Natural killer cell (primary cell): ENCODE measurements at regions of chr3 and their contacts with region 1.

Region 1: GRCh38 chr3:118884748-118885206 is 149.9 kb downstream of the IGSF11 start:
- DNase-seq: peak; percentile 65 to 83
- ATAC-seq: peak; percentile 80 to 95 (median 90)
- H3K4me3 ChIP-seq: no peak overlapping the region
- H3K4me3 Mint-ChIP-seq: no peak overlapping the region
- H3K27ac ChIP-seq: no peak overlapping the region
- H3K27ac Mint-ChIP-seq: no peak overlapping the region
- H3K4me1 ChIP-seq: no peaks in the 10 kb centered on the region
- H3K4me1 Mint-ChIP-seq: peaks cover 0 to 6% of the 10 kb centered on the region in 2 donors
- H3K27me3 ChIP-seq: no peaks in the 10 kb centered on the region
- H3K27me3 Mint-ChIP-seq: peaks cover 32 to 35% of the 10 kb centered on the region in 2 donors
- CTCF ChIP-seq: peak; percentile 87

Region 2: DNA sequence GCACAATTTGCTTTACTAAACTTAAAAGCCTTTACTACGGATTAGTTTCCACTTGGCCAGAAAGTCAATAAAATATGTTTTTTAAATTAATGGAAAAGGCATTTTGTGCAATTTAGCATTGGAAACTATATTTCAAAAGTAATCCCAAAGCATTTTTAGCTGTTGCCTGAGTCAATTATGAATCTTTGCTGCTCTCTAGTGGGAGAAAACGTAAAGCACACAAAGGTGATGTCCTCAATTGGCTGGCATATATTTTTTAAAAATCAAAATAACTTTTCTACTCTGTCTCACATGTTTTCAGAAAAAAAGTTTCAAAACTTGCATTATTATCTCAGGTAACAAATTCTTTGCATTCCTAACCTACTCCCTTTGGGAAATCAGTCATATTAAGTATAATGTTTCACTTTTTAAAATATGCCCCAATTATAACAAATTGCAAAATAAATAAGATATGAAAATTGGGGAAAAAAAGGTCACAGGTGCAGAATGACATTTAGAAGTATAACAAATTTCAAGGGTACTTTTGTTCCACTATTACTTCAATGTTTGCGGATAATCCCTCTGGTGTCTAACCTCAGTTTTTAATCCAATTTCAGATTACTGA is 213.9 kb after region 1 on chr3:
- intact Hi-C with region 1: loop called (anchors 1 kb)
- DNase-seq: peak in 1 of 2 donors; percentile 72
- ATAC-seq: no peak
- H3K4me3 ChIP-seq: no peak overlapping the region
- H3K4me3 Mint-ChIP-seq: no peak overlapping the region
- H3K27ac ChIP-seq: no peak overlapping the region
- H3K27ac Mint-ChIP-seq: no peak overlapping the region
- H3K4me1 ChIP-seq: no peaks in the 10 kb centered on the region
- H3K4me1 Mint-ChIP-seq: no peaks in the 10 kb centered on the region
- H3K27me3 ChIP-seq: no peaks in the 10 kb centered on the region
- H3K27me3 Mint-ChIP-seq: peaks cover 3 to 6% of the 10 kb centered on the region in 2 donors
- CTCF ChIP-seq: peak; percentile 45

Region 3: GRCh38 chr3:119240591-119241434 is 356.0 kb after region 1 on chr3 and contains the start of gene B4GALT4:
- intact Hi-C with region 1: loop called (anchors 1 kb)
- DNase-seq: peak; percentile 79 to 80
- ATAC-seq: peak; percentile 78 to 91 (median 84)
- H3K4me3 ChIP-seq: peak within 1 kb of the TSS; percentile 49
- H3K4me3 Mint-ChIP-seq: peak within 1 kb of the TSS; percentile 96
- H3K27ac ChIP-seq: peak within 1 kb of the TSS; percentile 79
- H3K27ac Mint-ChIP-seq: peak within 1 kb of the TSS; percentile 92 to 96
- H3K4me1 ChIP-seq: peaks cover 37% of the 10 kb centered on the region
- H3K4me1 Mint-ChIP-seq: peaks cover 29 to 37% of the 10 kb centered on the region in 2 donors
- H3K27me3 ChIP-seq: no peaks in the 10 kb centered on the region
- H3K27me3 Mint-ChIP-seq: no peaks in the 10 kb centered on the region
- CTCF ChIP-seq: no peak
- total RNA-seq, gene B4GALT4: 35.1 to 54.1 (median 48.8) TPM

Region 4: GRCh38 chr3:119559441-119559963 is 674.7 kb after region 1 on chr3 and contains the start of gene CD80:
- intact Hi-C with region 1: loop called (anchors 1 kb)
- DNase-seq: peak; percentile 27 to 72
- ATAC-seq: peak; percentile 60 to 81 (median 74)
- H3K4me3 ChIP-seq: peak within 1 kb of the TSS; percentile 19
- H3K4me3 Mint-ChIP-seq: no peak within 1 kb of the TSS
- H3K27ac ChIP-seq: peak within 1 kb of the TSS; percentile 31
- H3K27ac Mint-ChIP-seq: peak within 1 kb of the TSS in 1 of 2 donors; percentile 62
- H3K4me1 ChIP-seq: peaks cover 19% of the 10 kb centered on the region
- H3K4me1 Mint-ChIP-seq: peaks cover 5 to 6% of the 10 kb centered on the region in 2 donors
- H3K27me3 ChIP-seq: no peaks in the 10 kb centered on the region
- H3K27me3 Mint-ChIP-seq: peaks cover 0 to 6% of the 10 kb centered on the region in 2 donors
- CTCF ChIP-seq: peak; percentile 26
- total RNA-seq, gene CD80: 0.40 to 1.1 TPM in 2 of 3 donors, not detected in the other